ENCODE measurements at regions of chr15 and their contacts with region 1.

Region 1: GRCh38 chr15:52179278-52180195 is 11.7 kb downstream of the GNB5 start:
- DNase-seq: peak; percentile 93
- ATAC-seq: peak; percentile 86
- H3K4me3 Mint-ChIP-seq: peak overlapping the region; percentile 90
- H3K27ac Mint-ChIP-seq: peak overlapping the region; percentile 92
- H3K4me1 Mint-ChIP-seq: peaks cover 28% of the 10 kb centered on the region
- H3K27me3 Mint-ChIP-seq: peaks cover 6% of the 10 kb centered on the region

Region 2: GRCh38 chr15:51971375-51972133 is 208.0 kb before region 1 on chr15 and contains the start of gene LEO1:
- POLR2A ChIA-PET with region 1: interaction called, 16 read pairs
- DNase-seq: peak; percentile 83
- ATAC-seq: peak; percentile 88
- H3K4me3 Mint-ChIP-seq: peak within 1 kb of the TSS; percentile 98
- H3K27ac Mint-ChIP-seq: peak within 1 kb of the TSS; percentile 93
- H3K4me1 Mint-ChIP-seq: peaks cover 20% of the 10 kb centered on the region
- H3K27me3 Mint-ChIP-seq: no peaks in the 10 kb centered on the region
- total RNA-seq, gene LEO1: 26.5 to 28.3 TPM

Region 3: DNA sequence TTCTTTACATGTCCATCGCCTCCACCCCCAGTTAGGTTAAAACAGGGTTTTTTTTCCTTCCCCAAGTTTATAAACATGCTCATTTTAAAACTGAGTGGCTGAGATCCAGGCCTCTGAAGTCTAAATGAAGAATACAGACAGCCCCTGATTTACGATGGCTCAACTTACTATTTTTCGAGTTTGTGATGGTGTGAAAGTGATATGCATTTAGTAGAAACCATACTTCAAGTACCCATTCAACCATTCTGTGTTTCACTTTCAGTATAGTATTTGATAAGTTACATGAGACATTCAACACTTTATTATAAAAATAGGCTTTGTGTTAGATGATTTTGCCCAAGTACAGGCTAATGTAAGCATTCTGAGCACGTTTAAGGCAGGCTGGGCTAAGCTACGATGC is 42.2 kb after region 1 on chr15:
- POLR2A ChIA-PET with region 1: interaction called, 23 read pairs
- DNase-seq: no peak
- ATAC-seq: no peak
- H3K4me3 Mint-ChIP-seq: peak overlapping the region; percentile 83
- H3K27ac Mint-ChIP-seq: peak overlapping the region; percentile 92
- H3K4me1 Mint-ChIP-seq: peaks cover 21% of the 10 kb centered on the region
- H3K27me3 Mint-ChIP-seq: no peaks in the 10 kb centered on the region